ENCODE measurements at regions of chr10 and their contacts with region 1.

Region 1: DNA sequence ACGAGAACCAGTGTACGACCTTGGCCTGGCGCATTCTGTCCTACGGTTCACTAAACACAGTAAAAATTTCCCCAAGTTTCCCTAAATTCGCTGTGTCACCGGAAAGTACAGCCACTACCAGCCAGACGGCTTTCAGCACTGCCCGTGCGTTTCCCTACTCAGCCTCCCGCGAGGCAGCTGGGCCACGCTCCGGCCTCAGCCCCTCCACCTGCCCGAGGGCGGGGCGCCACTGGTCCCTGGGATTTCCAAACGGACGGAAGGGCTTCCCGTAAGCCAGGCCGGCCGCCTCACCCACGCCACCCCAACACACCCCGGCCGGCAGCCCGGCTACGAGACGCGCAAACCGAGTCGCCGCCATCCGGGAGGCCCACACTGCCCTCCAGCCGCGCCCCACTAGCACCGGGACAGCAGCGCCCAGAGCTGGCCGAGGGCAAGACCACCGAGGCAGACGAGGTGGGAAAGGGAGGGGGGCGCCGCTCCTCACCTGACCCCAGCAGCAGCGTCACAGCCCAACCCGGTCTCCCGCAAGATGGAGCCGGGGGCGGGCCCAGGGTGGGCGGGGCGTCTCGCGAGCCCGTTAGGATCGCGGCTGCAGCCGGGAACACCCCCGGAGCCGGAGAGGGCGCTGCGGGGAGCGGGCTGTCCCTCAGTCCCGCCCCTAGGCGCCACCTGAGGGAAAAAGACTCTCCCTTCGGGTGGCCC is at the start of gene ANXA7:
- DNase-seq: peak; percentile 97 to 100 (median 100)
- ATAC-seq: peak; percentile 99
- H3K4me3 ChIP-seq: peak within 1 kb of the TSS; percentile 89
- H3K27ac ChIP-seq: peak within 1 kb of the TSS; percentile 95
- H3K4me1 ChIP-seq: peaks cover 9 to 11% of the 10 kb centered on the region in 2 experiments; a peak in 4 of 5 replicates
- H3K27me3 ChIP-seq: no peaks in the 10 kb centered on the region
- CTCF ChIP-seq: peak; percentile 45 to 73 (median 63); a peak in 5 of 6 replicates
- EP300 ChIP-seq: no peak
- POLR2A ChIP-seq: peak; percentile 97
- RAD21 ChIP-seq: 0 out of 4 replicates have a peak, but pooled peaks of 1 of the 2 experiments have one; percentile 3
- polyA plus RNA-seq, gene ANXA7: 86.4 to 122 TPM

Region 2: GRCh38 chr10:73399063-73399462 is 14.6 kb before region 1 on chr10:
- CTCF ChIA-PET with region 1: no interaction called
- POLR2A ChIA-PET with region 1: interaction called, 16 read pairs
- in situ Hi-C with region 1: no loop called
- intact Hi-C with region 1: no loop called
- DNase-seq: no peak
- ATAC-seq: no peak
- H3K4me3 ChIP-seq: no peak overlapping the region
- H3K27ac ChIP-seq: no peak overlapping the region
- H3K4me1 ChIP-seq: no peaks in the 10 kb centered on the region
- H3K27me3 ChIP-seq: no peaks in the 10 kb centered on the region
- CTCF ChIP-seq: no peak
- EP300 ChIP-seq: no peak
- POLR2A ChIP-seq: no peak
- RAD21 ChIP-seq: no peak

Region 3: GRCh38 chr10:73459683-73460314 is 46.1 kb after region 1 on chr10:
- CTCF ChIA-PET with region 1: no interaction called
- POLR2A ChIA-PET with region 1: interaction called, 4 read pairs
- in situ Hi-C with region 1: no loop called
- intact Hi-C with region 1: loop called (anchors 2 kb)
- DNase-seq: peak in 2 of 4 experiments; percentile 17 to 32
- ATAC-seq: peak; percentile 38
- H3K4me3 ChIP-seq: no peak overlapping the region
- H3K27ac ChIP-seq: peak overlapping the region; percentile 20; the same call in 1 of the 3 replicates
- H3K4me1 ChIP-seq: peaks cover 14 to 25% of the 10 kb centered on the region in 2 experiments; a peak in 4 of 5 replicates
- H3K27me3 ChIP-seq: no peaks in the 10 kb centered on the region
- CTCF ChIP-seq: no peak
- EP300 ChIP-seq: no peak; the same call in 1 of the 2 replicates
- POLR2A ChIP-seq: no peak
- RAD21 ChIP-seq: no peak

Region 4: DNA sequence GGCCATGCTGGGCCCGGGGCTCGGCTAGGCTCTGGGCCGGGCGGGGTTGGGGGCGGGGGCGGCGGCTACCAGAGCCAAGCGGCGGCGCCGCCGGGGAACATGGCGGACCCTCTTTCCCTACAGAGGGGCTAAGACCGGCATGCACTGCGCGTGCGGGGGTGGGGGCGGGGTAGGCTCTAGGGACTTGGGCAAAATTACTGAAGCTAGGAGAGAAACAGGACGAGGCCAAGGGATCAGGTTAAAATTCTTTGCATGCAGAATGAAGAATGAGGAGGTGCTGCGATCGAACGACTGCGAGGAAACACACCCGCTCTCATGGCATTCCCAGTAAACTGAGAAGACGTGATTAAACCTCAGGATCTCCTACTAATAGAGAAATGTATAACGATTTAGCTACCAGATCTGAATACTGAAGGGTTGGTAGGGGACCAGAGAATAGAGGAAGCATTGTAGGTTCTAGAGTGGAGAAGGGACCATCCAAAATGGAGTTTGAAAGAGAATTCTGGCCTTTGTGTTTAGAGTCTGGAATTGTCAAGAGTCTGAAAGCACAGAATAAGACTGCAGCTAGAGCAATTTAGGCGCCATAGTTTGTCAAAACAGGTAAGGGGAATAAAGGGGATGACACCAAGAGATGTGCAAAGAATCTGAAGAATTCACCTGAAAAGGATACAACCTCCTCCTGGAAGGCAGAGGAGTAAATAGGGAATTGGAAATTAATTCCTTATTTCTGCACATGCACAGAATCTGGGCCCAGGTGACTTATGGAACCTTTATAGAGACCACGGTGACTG is 82.4 kb after region 1 on chr10 and contains the start of gene PPP3CB:
- CTCF ChIA-PET with region 1: no interaction called
- POLR2A ChIA-PET with region 1: interaction called, 4 read pairs
- in situ Hi-C with region 1: no loop called
- intact Hi-C with region 1: loop called (anchors 5 kb)
- DNase-seq: peak in 3 of 4 experiments; percentile 97 to 99 (median 97)
- ATAC-seq: peak; percentile 90
- H3K4me3 ChIP-seq: peak within 1 kb of the TSS; percentile 96
- H3K27ac ChIP-seq: peak within 1 kb of the TSS; percentile 96
- H3K4me1 ChIP-seq: peaks cover 12 to 18% of the 10 kb centered on the region in 2 experiments
- H3K27me3 ChIP-seq: no peaks in the 10 kb centered on the region
- CTCF ChIP-seq: no peak
- EP300 ChIP-seq: peak; percentile 65
- POLR2A ChIP-seq: no peak
- RAD21 ChIP-seq: no peak
- polyA plus RNA-seq, gene PPP3CB: 10.8 to 13.7 TPM

Region 5: GRCh38 chr10:73785221-73785720 is 371.6 kb after region 1 on chr10 and contains the start of gene ZSWIM8:
- CTCF ChIA-PET with region 1: no interaction called
- POLR2A ChIA-PET with region 1: no interaction called
- in situ Hi-C with region 1: no loop called
- intact Hi-C with region 1: no loop called
- DNase-seq: peak; percentile 93 to 96 (median 94)
- ATAC-seq: peak; percentile 87
- H3K4me3 ChIP-seq: peak within 1 kb of the TSS; percentile 89
- H3K27ac ChIP-seq: peak within 1 kb of the TSS; percentile 76
- H3K4me1 ChIP-seq: peaks cover 16 to 32% of the 10 kb centered on the region in 2 experiments
- H3K27me3 ChIP-seq: no peaks in the 10 kb centered on the region
- CTCF ChIP-seq: peak in 1 of 3 experiments; percentile 24; a peak in 1 of 6 replicates
- EP300 ChIP-seq: no peak
- POLR2A ChIP-seq: peak; percentile 85
- RAD21 ChIP-seq: no peak; a peak in 2 of 4 replicates
- polyA plus RNA-seq, gene ZSWIM8: 5.6 to 6.2 TPM

Region 6: GRCh38 chr10:74363727-74364126 is 950.0 kb after region 1 on chr10:
- CTCF ChIA-PET with region 1: no interaction called
- POLR2A ChIA-PET with region 1: no interaction called
- in situ Hi-C with region 1: no loop called
- intact Hi-C with region 1: no loop called
- DNase-seq: no peak
- ATAC-seq: peak; percentile 40; the same call in 2 of the 3 replicates
- H3K4me3 ChIP-seq: no peak overlapping the region
- H3K27ac ChIP-seq: no peak overlapping the region
- H3K4me1 ChIP-seq: peaks cover 0 to 6% of the 10 kb centered on the region in 2 experiments; a peak in 3 of 5 replicates
- H3K27me3 ChIP-seq: no peaks in the 10 kb centered on the region
- CTCF ChIP-seq: no peak
- EP300 ChIP-seq: no peak
- POLR2A ChIP-seq: no peak
- RAD21 ChIP-seq: no peak

Measured in K562 (cell line).